B cell (primary cell): ENCODE measurements at regions of chr4 and their contacts with region 1.

Region 1: GRCh38 chr4:2468445-2469192 is at the start of gene RNF4:
- DNase-seq: peak; percentile 96
- ATAC-seq: peak; percentile 85
- H3K4me3 ChIP-seq: peak within 1 kb of the TSS; percentile 77 to 99 (median 90)
- H3K4me3 Mint-ChIP-seq: peak within 1 kb of the TSS; percentile 99
- H3K27ac ChIP-seq: peak within 1 kb of the TSS; percentile 90 to 97
- H3K27ac Mint-ChIP-seq: peak within 1 kb of the TSS; percentile 99
- H3K4me1 ChIP-seq: peaks cover 31 to 33% of the 10 kb centered on the region in 2 donors
- H3K4me1 Mint-ChIP-seq: peaks cover 45% of the 10 kb centered on the region
- H3K27me3 ChIP-seq: no peaks in the 10 kb centered on the region
- H3K27me3 Mint-ChIP-seq: no peaks in the 10 kb centered on the region
- CTCF ChIP-seq: no peak
- total RNA-seq, gene RNF4: 95.2 and 104 TPM in 2 replicates

Region 2: DNA sequence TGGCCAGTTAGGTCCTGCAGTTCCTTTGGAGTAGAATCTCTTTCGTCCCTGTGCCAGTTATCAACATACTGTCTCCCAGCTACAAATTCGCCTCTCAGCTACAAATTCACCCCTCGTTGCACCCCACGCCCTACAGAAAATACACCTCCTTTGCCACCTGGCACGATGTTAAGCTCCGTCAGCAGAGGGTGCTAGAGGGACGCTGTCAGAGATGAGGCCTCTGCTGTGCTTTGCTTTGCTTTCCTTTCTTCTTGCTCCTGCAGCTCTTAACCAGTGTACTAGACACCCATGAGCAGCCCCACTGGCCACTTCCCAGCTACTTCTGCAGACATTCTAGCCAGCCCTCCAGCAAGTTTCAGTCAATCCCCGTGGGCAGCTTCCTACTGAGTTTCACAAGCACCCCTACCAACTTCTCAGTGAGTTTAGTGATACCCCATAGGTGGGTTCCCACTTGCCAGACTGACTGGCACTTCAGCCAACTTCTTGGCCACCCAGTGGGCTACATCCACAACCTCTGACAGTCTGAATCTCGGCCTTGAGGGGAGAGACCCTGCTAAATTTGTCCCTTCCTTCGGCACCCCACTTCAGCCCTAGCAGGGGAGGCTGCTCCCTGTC is 248.5 kb before region 1 on chr4:
- CTCF ChIA-PET with region 1: interaction called, 54 read pairs
- POLR2A ChIA-PET with region 1: no interaction called
- intact Hi-C with region 1: no loop called
- DNase-seq: peak; percentile 82
- ATAC-seq: peak; percentile 90
- H3K4me3 ChIP-seq: no peak overlapping the region
- H3K4me3 Mint-ChIP-seq: no peak overlapping the region
- H3K27ac ChIP-seq: no peak overlapping the region
- H3K27ac Mint-ChIP-seq: peak overlapping the region; percentile 26
- H3K4me1 ChIP-seq: peaks cover 0 to 5% of the 10 kb centered on the region in 2 donors
- H3K4me1 Mint-ChIP-seq: peaks cover 4% of the 10 kb centered on the region
- H3K27me3 ChIP-seq: no peaks in the 10 kb centered on the region
- H3K27me3 Mint-ChIP-seq: no peaks in the 10 kb centered on the region
- CTCF ChIP-seq: peak; percentile 88

Region 3: GRCh38 chr4:2269206-2269531 is 199.4 kb before region 1 on chr4:
- CTCF ChIA-PET with region 1: no interaction called
- POLR2A ChIA-PET with region 1: no interaction called
- intact Hi-C with region 1: no loop called
- DNase-seq: no peak
- ATAC-seq: no peak
- H3K4me3 ChIP-seq: no peak overlapping the region
- H3K4me3 Mint-ChIP-seq: no peak overlapping the region
- H3K27ac ChIP-seq: no peak overlapping the region
- H3K27ac Mint-ChIP-seq: no peak overlapping the region
- H3K4me1 ChIP-seq: peaks cover 0 to 3% of the 10 kb centered on the region in 2 donors
- H3K4me1 Mint-ChIP-seq: no peaks in the 10 kb centered on the region
- H3K27me3 ChIP-seq: no peaks in the 10 kb centered on the region
- H3K27me3 Mint-ChIP-seq: no peaks in the 10 kb centered on the region
- CTCF ChIP-seq: no peak

Region 4: DNA sequence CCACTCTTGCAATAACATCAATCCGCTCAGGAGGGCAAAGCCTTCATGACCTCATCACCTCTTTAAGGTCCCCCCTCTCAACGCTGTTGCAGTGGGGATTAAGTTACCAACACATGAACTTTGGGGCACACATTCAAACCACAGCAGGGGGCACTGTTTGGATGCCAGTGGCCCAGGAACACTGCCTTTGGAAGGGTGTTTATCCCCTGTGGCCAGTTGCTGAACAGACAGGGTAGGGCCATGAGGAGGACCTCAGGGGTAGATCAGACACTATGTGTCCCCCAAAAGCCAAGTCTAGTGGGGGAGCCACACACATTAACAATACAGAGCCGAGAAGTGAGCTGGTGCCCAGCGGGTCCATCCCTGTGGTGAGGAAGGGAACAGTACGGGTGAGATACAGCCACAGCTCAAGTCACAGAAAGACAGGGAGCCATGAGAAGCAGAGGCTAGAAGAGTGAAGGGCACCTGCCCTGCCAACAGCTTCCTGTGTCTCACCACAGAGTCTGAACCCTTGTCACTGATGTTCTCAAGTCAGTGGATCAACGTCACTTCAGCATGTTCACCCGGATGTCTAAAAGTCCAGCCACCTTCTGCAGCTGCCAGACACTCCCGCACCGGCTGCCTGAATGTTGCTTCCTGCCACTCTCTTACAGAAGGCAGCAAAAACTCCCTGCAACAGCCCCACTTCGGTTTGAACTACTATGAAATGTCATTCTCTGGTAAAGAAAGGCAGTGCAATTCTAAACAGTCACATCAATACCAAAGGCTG is 186.9 kb before region 1 on chr4:
- CTCF ChIA-PET with region 1: no interaction called
- POLR2A ChIA-PET with region 1: no interaction called
- intact Hi-C with region 1: loop called (anchors 5 kb)
- DNase-seq: peak; percentile 90
- ATAC-seq: peak; percentile 92
- H3K4me3 ChIP-seq: no peak overlapping the region
- H3K4me3 Mint-ChIP-seq: peak overlapping the region; percentile 87
- H3K27ac ChIP-seq: peak overlapping the region; percentile 54 to 83
- H3K27ac Mint-ChIP-seq: peak overlapping the region; percentile 99
- H3K4me1 ChIP-seq: peaks cover 18 to 21% of the 10 kb centered on the region in 2 donors
- H3K4me1 Mint-ChIP-seq: peaks cover 33% of the 10 kb centered on the region
- H3K27me3 ChIP-seq: no peaks in the 10 kb centered on the region
- H3K27me3 Mint-ChIP-seq: no peaks in the 10 kb centered on the region
- CTCF ChIP-seq: peak; percentile 76

Region 5: DNA sequence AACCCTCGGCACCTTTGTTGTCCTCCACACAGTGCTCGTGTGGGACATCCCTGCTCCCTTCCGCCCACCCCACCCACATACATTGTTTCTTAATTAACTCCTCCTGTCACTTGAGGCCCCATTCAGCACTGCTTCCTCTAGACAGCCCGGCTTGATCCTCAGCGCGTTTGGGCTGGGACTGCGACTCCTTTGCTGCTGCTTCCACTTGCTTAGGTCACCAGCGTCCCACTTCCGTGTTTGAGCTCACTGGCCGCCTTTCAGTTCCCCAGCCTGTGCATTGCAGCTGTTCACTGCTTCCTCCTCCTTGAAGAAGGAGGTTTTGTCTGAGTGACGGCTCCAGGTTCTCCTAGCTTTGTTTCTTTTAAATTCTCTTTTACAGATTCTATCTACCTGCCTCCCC is 16.4 kb after region 1 on chr4:
- CTCF ChIA-PET with region 1: interaction called, 29 read pairs
- POLR2A ChIA-PET with region 1: interaction called, 19 read pairs
- intact Hi-C with region 1: loop called (anchors 1 kb)
- DNase-seq: peak; percentile 90
- ATAC-seq: peak; percentile 93
- H3K4me3 ChIP-seq: peak overlapping the region; percentile 17 to 54 (median 28)
- H3K4me3 Mint-ChIP-seq: peak overlapping the region; percentile 72
- H3K27ac ChIP-seq: peak overlapping the region; percentile 76 to 89
- H3K27ac Mint-ChIP-seq: peak overlapping the region; percentile 85
- H3K4me1 ChIP-seq: peaks cover 78 to 88% of the 10 kb centered on the region in 2 donors
- H3K4me1 Mint-ChIP-seq: peaks cover 85% of the 10 kb centered on the region
- H3K27me3 ChIP-seq: no peaks in the 10 kb centered on the region
- H3K27me3 Mint-ChIP-seq: no peaks in the 10 kb centered on the region
- CTCF ChIP-seq: no peak

Region 6: DNA sequence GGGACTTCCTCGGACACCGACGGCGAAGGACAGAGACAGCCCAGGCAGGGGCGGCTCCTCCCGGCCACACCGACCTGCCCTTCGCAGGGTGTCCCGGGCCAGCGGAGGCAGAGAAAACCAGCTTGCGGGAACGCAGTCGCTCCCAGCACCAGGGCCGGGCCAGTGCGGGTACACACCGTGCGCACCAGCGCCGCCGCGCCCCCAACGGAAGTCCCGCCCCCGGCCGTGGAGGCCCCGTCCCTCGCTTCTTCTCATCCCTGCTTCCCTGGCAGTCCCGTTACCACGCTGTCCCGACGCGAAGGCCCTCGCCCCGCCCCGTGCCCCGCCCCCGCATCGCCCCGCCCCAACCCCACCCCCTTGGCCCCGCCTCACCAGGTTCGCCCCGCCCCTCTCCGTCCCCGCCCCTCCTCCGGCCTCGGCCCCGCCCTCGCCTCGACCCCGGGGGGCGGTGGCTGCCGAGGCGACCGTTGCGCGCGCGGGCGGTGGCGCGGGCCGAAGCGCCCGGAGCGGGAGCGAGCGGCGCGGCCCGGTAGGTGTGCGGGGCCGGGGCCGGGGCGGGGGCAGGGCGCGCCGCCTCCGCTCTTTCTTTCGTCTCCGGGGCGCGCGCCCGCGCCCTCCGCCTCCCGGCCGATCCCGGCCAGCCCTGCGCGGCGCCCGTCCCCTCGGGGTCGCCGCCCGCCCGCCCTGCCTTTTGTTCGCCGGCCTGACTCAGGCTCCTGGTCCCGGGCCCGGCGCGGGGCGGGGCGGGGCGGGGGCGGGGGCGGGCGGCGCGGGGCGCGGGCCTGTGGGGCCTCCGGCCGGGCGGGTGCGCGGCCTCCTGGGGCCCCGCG is 824.2 kb after region 1 on chr4 and contains the start of gene RGS12:
- CTCF ChIA-PET with region 1: no interaction called
- POLR2A ChIA-PET with region 1: no interaction called
- intact Hi-C with region 1: no loop called
- DNase-seq: peak; percentile 82
- ATAC-seq: peak; percentile 82
- H3K4me3 ChIP-seq: peak within 1 kb of the TSS; percentile 8 to 80 (median 72)
- H3K4me3 Mint-ChIP-seq: peak within 1 kb of the TSS; percentile 89
- H3K27ac ChIP-seq: peak within 1 kb of the TSS in 1 of 2 donors; percentile 48
- H3K27ac Mint-ChIP-seq: peak within 1 kb of the TSS; percentile 81
- H3K4me1 ChIP-seq: peaks cover 7 to 17% of the 10 kb centered on the region in 2 donors
- H3K4me1 Mint-ChIP-seq: peaks cover 13% of the 10 kb centered on the region
- H3K27me3 ChIP-seq: peaks cover 0 to 20% (median 3%) of the 10 kb centered on the region in 4 experiments
- H3K27me3 Mint-ChIP-seq: peaks cover 14% of the 10 kb centered on the region
- CTCF ChIP-seq: no peak
- total RNA-seq, gene RGS12: 13.1 and 13.9 TPM in 2 replicates

Region 7: GRCh38 chr4:3657902-3658529 is 1189.4 kb after region 1 on chr4:
- CTCF ChIA-PET with region 1: no interaction called
- POLR2A ChIA-PET with region 1: no interaction called
- intact Hi-C with region 1: no loop called
- DNase-seq: no peak
- ATAC-seq: no peak
- H3K4me3 ChIP-seq: no peak overlapping the region
- H3K4me3 Mint-ChIP-seq: no peak overlapping the region
- H3K27ac ChIP-seq: no peak overlapping the region
- H3K27ac Mint-ChIP-seq: no peak overlapping the region
- H3K4me1 ChIP-seq: no peaks in the 10 kb centered on the region
- H3K4me1 Mint-ChIP-seq: peaks cover 5% of the 10 kb centered on the region
- H3K27me3 ChIP-seq: peaks cover 0 to 6% (median 0%) of the 10 kb centered on the region in 4 experiments
- H3K27me3 Mint-ChIP-seq: peaks cover 27% of the 10 kb centered on the region
- CTCF ChIP-seq: no peak